CD14-positive monocyte (primary cell): ENCODE measurements at regions of chr19 and their contacts with region 1.

Region 1: GRCh38 chr19:36850559-36851442 is at the start of gene ZNF345:
- DNase-seq: peak; percentile 81 to 89 (median 81)
- H3K4me3 ChIP-seq: peak within 1 kb of the TSS; percentile 67 to 98 (median 86)
- H3K4me3 Mint-ChIP-seq: no peak within 1 kb of the TSS
- H3K27ac ChIP-seq: peak within 1 kb of the TSS; percentile 63 to 86
- H3K27ac Mint-ChIP-seq: no peak within 1 kb of the TSS
- H3K4me1 ChIP-seq: peaks cover 16 to 31% of the 10 kb centered on the region in 2 donors
- H3K4me1 Mint-ChIP-seq: peaks cover 2% of the 10 kb centered on the region
- H3K27me3 ChIP-seq: no peaks in the 10 kb centered on the region
- H3K27me3 Mint-ChIP-seq: peaks cover 1 to 3% (median 3%) of the 10 kb centered on the region in 3 donors
- CTCF ChIP-seq: no peak
- polyA plus RNA-seq, gene ZNF345: 0.66 to 2.3 (median 1.3) TPM

Region 2: GRCh38 chr19:36378625-36379509 is 471.9 kb before region 1 on chr19 and contains the start of gene ZFP14:
- intact Hi-C with region 1: loop called in 1 of 2 experiments (anchors 10 kb)
- DNase-seq: peak; percentile 82 to 91 (median 86)
- H3K4me3 ChIP-seq: peak within 1 kb of the TSS; percentile 65 to 90 (median 81)
- H3K4me3 Mint-ChIP-seq: peak within 1 kb of the TSS; percentile 92 to 95
- H3K27ac ChIP-seq: peak within 1 kb of the TSS; percentile 54 to 78
- H3K27ac Mint-ChIP-seq: peak within 1 kb of the TSS; percentile 78 to 94 (median 83)
- H3K4me1 ChIP-seq: peaks cover 13 to 17% of the 10 kb centered on the region in 2 donors
- H3K4me1 Mint-ChIP-seq: peaks cover 15% of the 10 kb centered on the region
- H3K27me3 ChIP-seq: no peaks in the 10 kb centered on the region
- H3K27me3 Mint-ChIP-seq: peaks cover 2 to 4% (median 3%) of the 10 kb centered on the region in 3 donors
- CTCF ChIP-seq: no peak
- polyA plus RNA-seq, gene ZFP14: 0.72 to 1.9 (median 1.1) TPM

Region 3: DNA sequence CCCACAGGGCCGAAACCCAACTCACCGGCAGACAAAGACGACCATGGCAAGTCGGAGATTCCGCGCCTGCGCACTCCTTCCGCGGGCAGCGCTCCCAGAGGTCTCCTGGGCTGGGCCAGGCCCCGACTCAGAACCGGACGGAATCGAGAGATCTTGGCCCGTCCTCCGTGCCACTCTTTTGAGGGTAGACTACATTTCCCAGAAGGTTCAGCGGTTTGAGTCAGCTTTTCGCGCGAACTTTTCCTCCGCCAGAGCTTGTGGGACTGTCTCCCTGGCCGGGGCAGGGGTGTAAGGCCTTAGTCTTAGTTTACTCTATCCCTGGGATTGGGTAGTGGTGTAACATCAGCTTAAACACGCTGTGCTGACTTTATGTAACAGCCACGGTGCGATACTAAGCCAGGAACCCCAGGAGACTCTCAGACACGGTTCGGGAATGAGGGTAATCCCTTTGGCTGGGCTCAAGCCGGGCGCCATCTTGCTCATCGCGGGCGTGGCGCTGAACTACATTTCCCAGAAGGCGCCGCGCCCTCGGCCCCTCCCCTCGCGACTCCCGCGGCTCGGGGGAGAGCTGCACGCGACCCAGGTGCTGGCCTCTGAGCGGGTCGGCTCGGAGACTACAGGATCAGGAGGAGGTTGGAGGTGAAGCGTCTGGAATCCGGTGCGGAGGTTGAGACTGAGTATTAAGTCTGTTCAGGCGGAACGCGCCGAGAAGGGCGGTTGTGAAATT is 322.4 kb before region 1 on chr19 and contains the start of gene ZNF260:
- intact Hi-C with region 1: loop called in 1 of 2 experiments (anchors 5 kb)
- DNase-seq: peak; percentile 90 to 92 (median 91)
- H3K4me3 ChIP-seq: peak within 1 kb of the TSS; percentile 63 to 84 (median 74)
- H3K4me3 Mint-ChIP-seq: peak within 1 kb of the TSS; percentile 98 to 100
- H3K27ac ChIP-seq: peak within 1 kb of the TSS; percentile 70 to 77
- H3K27ac Mint-ChIP-seq: peak within 1 kb of the TSS; percentile 87 to 97 (median 95)
- H3K4me1 ChIP-seq: peaks cover 14 to 18% of the 10 kb centered on the region in 2 donors
- H3K4me1 Mint-ChIP-seq: peaks cover 18% of the 10 kb centered on the region
- H3K27me3 ChIP-seq: no peaks in the 10 kb centered on the region
- H3K27me3 Mint-ChIP-seq: peaks cover 0 to 5% (median 0%) of the 10 kb centered on the region in 3 donors
- CTCF ChIP-seq: no peak
- polyA plus RNA-seq, gene ZNF260: 0.88 to 2.1 (median 1.2) TPM

Region 4: DNA sequence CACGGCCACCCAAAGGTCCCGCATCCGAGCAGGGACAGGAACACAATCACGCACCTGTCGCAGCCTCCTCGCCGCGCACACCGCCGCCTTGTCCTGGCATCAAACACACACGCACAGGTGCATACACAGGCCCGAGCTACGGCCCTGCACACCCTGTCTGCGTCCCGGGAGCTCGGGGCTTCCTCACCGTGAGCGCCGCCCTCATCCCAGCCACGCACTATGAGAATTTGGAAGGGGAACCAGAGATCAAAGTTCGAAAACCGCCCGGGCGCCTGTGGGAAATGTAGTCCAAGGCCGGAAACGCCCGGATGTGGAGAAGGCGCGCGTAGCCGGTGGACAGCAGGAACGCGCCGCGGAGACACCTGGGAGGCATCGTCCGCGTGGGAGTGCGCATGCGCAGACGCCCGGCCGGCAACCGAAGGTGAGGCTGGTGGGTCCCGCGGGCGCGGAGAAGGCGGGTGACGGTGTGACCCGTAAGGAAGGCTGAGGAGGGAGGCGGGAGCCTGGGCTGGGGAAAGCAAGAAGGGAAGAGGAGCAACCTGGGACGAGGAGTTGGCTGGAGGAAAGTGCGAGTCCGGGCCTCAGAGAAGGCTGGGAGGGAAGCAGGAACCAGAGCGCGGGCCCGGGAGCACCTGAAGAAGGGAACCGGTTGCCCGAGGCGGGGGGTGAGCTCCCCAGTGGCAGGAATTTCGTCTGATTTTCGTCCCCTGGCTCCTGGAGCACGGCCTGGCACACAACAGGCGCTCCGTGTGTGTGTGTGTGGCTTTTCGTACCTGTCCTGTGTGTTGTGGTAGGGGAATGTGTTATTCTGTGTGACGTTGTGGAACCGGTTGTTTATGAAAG is 163.4 kb before region 1 on chr19 and contains the start of gene ZNF567:
- intact Hi-C with region 1: loop called (anchors 5 kb)
- DNase-seq: peak; percentile 88 to 90 (median 89)
- H3K4me3 ChIP-seq: peak within 1 kb of the TSS; percentile 35 to 92 (median 63)
- H3K4me3 Mint-ChIP-seq: peak within 1 kb of the TSS; percentile 96 to 99
- H3K27ac ChIP-seq: peak within 1 kb of the TSS; percentile 13 to 77
- H3K27ac Mint-ChIP-seq: peak within 1 kb of the TSS; percentile 66 to 90 (median 83)
- H3K4me1 ChIP-seq: peaks cover 15 to 23% of the 10 kb centered on the region in 2 donors
- H3K4me1 Mint-ChIP-seq: peaks cover 24% of the 10 kb centered on the region
- H3K27me3 ChIP-seq: no peaks in the 10 kb centered on the region
- H3K27me3 Mint-ChIP-seq: peaks cover 0 to 1% (median 0%) of the 10 kb centered on the region in 3 donors
- CTCF ChIP-seq: no peak
- polyA plus RNA-seq, gene ZNF567: 0.84 to 1.7 (median 1.5) TPM

Region 5: GRCh38 chr19:36915992-36916830 is 65.4 kb after region 1 on chr19 and contains the starts of genes ZNF568 and ZNF829:
- intact Hi-C with region 1: loop called in 1 of 2 experiments (anchors 10 kb)
- DNase-seq: peak; percentile 62 to 72 (median 69)
- H3K4me3 ChIP-seq: peak within 1 kb of the TSS; percentile 57 to 99 (median 78)
- H3K4me3 Mint-ChIP-seq: peak within 1 kb of the TSS; percentile 96
- H3K27ac ChIP-seq: peak within 1 kb of the TSS; percentile 53 to 84
- H3K27ac Mint-ChIP-seq: peak within 1 kb of the TSS; percentile 79 to 96 (median 90)
- H3K4me1 ChIP-seq: peaks cover 6 to 17% of the 10 kb centered on the region in 2 donors
- H3K4me1 Mint-ChIP-seq: peaks cover 18% of the 10 kb centered on the region
- H3K27me3 ChIP-seq: no peaks in the 10 kb centered on the region
- H3K27me3 Mint-ChIP-seq: peaks cover 0 to 4% (median 2%) of the 10 kb centered on the region in 3 donors
- CTCF ChIP-seq: peak; percentile 66
- polyA plus RNA-seq, gene ZNF568: 0.38 to 0.96 (median 0.79) TPM
- polyA plus RNA-seq, gene ZNF829: 0.05 to 0.14 (median 0.08) TPM

Region 6: DNA sequence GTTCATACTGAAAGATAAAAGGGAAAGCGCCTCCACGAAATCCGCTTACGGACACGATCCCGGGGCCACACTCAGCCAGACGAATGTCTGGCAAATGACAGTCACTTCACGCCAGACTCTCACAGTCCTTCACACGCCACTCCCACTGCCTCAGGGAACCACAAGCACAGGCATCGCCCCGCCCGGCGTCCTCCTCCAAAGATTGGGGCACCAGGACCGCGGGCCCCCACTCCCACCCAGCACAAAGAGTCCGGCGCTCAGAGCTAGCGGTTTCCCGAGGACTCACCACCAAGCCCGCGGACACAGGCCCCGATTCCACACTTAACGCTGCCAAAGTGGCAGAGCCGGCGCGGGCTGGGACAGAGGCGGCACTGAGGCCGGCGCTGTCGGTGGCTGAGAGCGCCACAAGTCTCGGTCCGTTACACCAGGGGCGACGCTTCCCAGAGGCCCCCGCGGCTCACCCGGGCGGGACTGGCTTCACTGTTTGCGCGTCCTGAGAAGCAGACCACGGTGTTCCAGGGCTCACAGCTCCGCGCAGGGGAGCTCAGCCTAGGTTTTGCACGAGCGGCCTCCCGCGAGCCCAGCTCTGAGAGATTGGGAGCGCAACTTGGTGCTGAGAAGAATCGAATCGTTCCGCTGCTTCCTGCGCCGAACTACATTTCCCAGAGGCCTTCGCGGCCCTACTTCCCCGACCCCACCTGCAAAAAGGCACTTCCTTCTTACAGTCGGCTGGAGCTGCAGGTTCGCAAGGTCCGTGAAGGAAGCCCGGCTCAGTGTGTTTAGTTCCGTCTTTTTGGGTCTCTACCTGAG is 616.2 kb after region 1 on chr19 and contains the start of gene ZNF569:
- intact Hi-C with region 1: loop called in 1 of 2 experiments (anchors 10 kb)
- DNase-seq: peak; percentile 75 to 81 (median 78)
- H3K4me3 ChIP-seq: peak within 1 kb of the TSS; percentile 45 to 98 (median 64)
- H3K4me3 Mint-ChIP-seq: peak within 1 kb of the TSS; percentile 96 to 98
- H3K27ac ChIP-seq: peak within 1 kb of the TSS; percentile 74 to 86
- H3K27ac Mint-ChIP-seq: peak within 1 kb of the TSS; percentile 67 to 95 (median 90)
- H3K4me1 ChIP-seq: peaks cover 26 to 33% of the 10 kb centered on the region in 2 donors
- H3K4me1 Mint-ChIP-seq: peaks cover 30% of the 10 kb centered on the region
- H3K27me3 ChIP-seq: no peaks in the 10 kb centered on the region
- H3K27me3 Mint-ChIP-seq: no peaks in the 10 kb centered on the region
- CTCF ChIP-seq: no peak
- polyA plus RNA-seq, gene ZNF569: 0.79 to 1.2 (median 0.83) TPM